Mammary epithelial cell (primary cell): ENCODE measurements at regions of chr2 and their contacts with region 1.

Region 1: GRCh38 chr2:108058576-108059137 is 72.3 kb downstream of the SLC5A7 start:
- DNase-seq: no peak
- H3K4me3 ChIP-seq: no peak overlapping the region
- H3K27ac ChIP-seq: no peak overlapping the region
- H3K4me1 ChIP-seq: no peaks in the 10 kb centered on the region
- H3K27me3 ChIP-seq: no peaks in the 10 kb centered on the region
- CTCF ChIP-seq: no peak

Region 2: GRCh38 chr2:107999158-107999557 is 59.5 kb before region 1 on chr2:
- CTCF ChIA-PET with region 1: no interaction called
- dilution Hi-C with region 1: loop called (anchors 5 kb)
- in situ Hi-C with region 1: no loop called
- intact Hi-C with region 1: no loop called
- DNase-seq: no peak
- H3K4me3 ChIP-seq: no peak overlapping the region
- H3K27ac ChIP-seq: no peak overlapping the region
- H3K4me1 ChIP-seq: no peaks in the 10 kb centered on the region
- H3K27me3 ChIP-seq: no peaks in the 10 kb centered on the region
- CTCF ChIP-seq: no peak